ENCODE measurements at regions of chr5 and their contacts with region 1.

Region 1: DNA sequence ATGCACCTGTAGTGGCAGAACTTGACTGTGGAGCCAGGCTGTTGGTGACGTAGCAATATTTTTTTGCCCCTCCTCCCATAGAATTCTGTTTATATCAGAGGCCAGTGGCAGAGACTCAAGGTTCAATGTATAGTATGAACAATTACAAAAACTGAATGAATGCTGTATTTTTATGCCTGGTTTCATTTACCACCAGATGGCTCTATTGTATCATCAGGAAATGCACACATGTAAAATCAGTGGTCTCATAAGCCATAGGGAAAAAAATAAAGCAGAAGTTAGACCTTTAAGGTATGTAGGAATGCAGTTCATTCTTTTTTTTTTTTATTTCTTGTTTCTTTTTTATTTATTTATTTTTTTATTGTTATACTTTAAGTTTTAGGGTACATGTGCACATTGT is 43.6 kb downstream of the CCDC192 start:
- DNase-seq: peak in 1 of 2 experiments; percentile 24
- H3K4me3 ChIP-seq: no peak overlapping the region
- H3K4me3 Mint-ChIP-seq: no peak overlapping the region
- H3K27ac Mint-ChIP-seq: no peak overlapping the region
- H3K4me1 ChIP-seq: no peaks in the 10 kb centered on the region
- H3K4me1 Mint-ChIP-seq: no peaks in the 10 kb centered on the region
- H3K27me3 ChIP-seq: no peaks in the 10 kb centered on the region
- H3K27me3 Mint-ChIP-seq: no peaks in the 10 kb centered on the region
- CTCF ChIP-seq: peak; percentile 52 to 72

Region 2: GRCh38 chr5:127564002-127564769 is 182.6 kb before region 1 on chr5:
- CTCF ChIA-PET with region 1: no interaction called
- POLR2A ChIA-PET with region 1: no interaction called
- intact Hi-C with region 1: loop called (anchors 1 kb)
- DNase-seq: peak; percentile 53 to 71
- H3K4me3 ChIP-seq: no peak overlapping the region
- H3K4me3 Mint-ChIP-seq: no peak overlapping the region
- H3K27ac Mint-ChIP-seq: no peak overlapping the region
- H3K4me1 ChIP-seq: no peaks in the 10 kb centered on the region
- H3K4me1 Mint-ChIP-seq: no peaks in the 10 kb centered on the region
- H3K27me3 ChIP-seq: no peaks in the 10 kb centered on the region
- H3K27me3 Mint-ChIP-seq: no peaks in the 10 kb centered on the region
- CTCF ChIP-seq: peak; percentile 60 to 80

Region 3: GRCh38 chr5:128201065-128201926 is 454.5 kb after region 1 on chr5:
- CTCF ChIA-PET with region 1: no interaction called
- POLR2A ChIA-PET with region 1: no interaction called
- intact Hi-C with region 1: loop called (anchors 2 kb)
- DNase-seq: peak; percentile 75 to 87
- H3K4me3 ChIP-seq: no peak overlapping the region
- H3K4me3 Mint-ChIP-seq: peak overlapping the region; percentile 57
- H3K27ac Mint-ChIP-seq: no peak overlapping the region
- H3K4me1 ChIP-seq: peaks cover 21% of the 10 kb centered on the region
- H3K4me1 Mint-ChIP-seq: peaks cover 25% of the 10 kb centered on the region
- H3K27me3 ChIP-seq: no peaks in the 10 kb centered on the region
- H3K27me3 Mint-ChIP-seq: no peaks in the 10 kb centered on the region
- CTCF ChIP-seq: peak; percentile 77 to 83

Region 4: DNA sequence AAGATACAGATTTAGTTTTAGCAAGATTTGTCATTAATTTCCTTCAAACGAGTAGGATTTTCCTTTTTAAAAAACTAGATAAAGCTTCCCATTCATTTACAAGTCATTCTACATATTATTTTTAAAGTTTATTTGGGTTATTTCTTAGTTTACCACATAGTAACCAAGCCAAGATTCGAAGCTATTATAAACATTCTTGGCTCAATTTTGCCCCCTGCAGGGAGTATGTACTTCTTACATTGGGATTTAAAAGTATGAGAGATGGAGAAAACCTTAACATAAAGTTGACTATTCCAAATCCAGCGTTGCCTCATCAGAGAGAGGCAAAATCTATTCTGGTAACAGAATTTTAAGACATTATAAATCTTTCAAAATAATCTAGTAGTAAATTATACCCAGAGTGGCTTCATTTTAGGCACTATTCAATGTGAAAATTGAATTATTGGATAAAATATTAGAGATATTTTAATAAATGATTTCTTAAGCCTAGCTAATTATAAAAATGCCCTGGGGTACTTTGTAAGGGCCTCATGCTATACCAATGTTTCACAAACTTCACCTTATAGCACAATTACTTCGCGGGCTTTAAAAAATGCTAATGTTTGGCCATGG is 752.2 kb after region 1 on chr5:
- CTCF ChIA-PET with region 1: no interaction called
- POLR2A ChIA-PET with region 1: no interaction called
- intact Hi-C with region 1: loop called (anchors 1 kb)
- DNase-seq: peak in 1 of 2 experiments; percentile 35
- H3K4me3 ChIP-seq: no peak overlapping the region
- H3K4me3 Mint-ChIP-seq: no peak overlapping the region
- H3K27ac Mint-ChIP-seq: no peak overlapping the region
- H3K4me1 ChIP-seq: no peaks in the 10 kb centered on the region
- H3K4me1 Mint-ChIP-seq: no peaks in the 10 kb centered on the region
- H3K27me3 ChIP-seq: no peaks in the 10 kb centered on the region
- H3K27me3 Mint-ChIP-seq: no peaks in the 10 kb centered on the region
- CTCF ChIP-seq: peak; percentile 51 to 64

Measured in Caco-2 (cell line).